ENCODE measurements at regions of chr6 and their contacts with region 1.

Region 1: GRCh38 chr6:42984001-42984923 is at the start of gene PPP2R5D:
- DNase-seq: peak; percentile 100
- ATAC-seq: peak; percentile 95
- H3K4me3 ChIP-seq: peak within 1 kb of the TSS; percentile 88 to 99 (median 92)
- H3K27ac ChIP-seq: peak within 1 kb of the TSS; percentile 75
- H3K4me1 ChIP-seq: peaks cover 52% of the 10 kb centered on the region
- H3K27me3 ChIP-seq: no peaks in the 10 kb centered on the region; a peak in 1 of 5 replicates
- CTCF ChIP-seq: no peak
- EP300 ChIP-seq: no peak
- POLR2A ChIP-seq: peak; percentile 93 to 99
- RAD21 ChIP-seq: peak; percentile 29; the same call in 1 of the 2 replicates
- total RNA-seq, gene PPP2R5D: 55.6 and 60.4 TPM in 2 replicates

Region 2: DNA sequence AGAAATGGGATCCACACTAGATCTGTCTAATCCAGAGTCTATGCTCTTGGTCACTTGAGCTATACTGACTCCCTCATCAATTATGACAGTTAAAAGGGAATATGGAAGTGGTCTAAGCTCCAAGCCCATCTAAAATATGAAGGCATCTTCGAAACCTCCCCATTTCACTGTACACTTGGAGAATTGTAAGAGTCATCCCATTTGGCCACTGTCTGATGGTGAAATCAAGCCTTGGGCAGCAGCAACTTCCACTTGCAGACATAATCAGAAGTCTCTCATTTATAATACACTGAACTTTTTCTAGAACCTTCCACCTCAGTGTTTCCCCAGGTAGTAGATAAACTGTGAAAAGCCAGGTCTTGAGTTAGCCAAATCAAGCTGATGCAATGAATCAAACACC is 446.7 kb before region 1 on chr6:
- CTCF ChIA-PET with region 1: no interaction called
- POLR2A ChIA-PET with region 1: no interaction called
- in situ Hi-C with region 1: no loop called
- intact Hi-C with region 1: no loop called
- DNase-seq: no peak
- ATAC-seq: no peak
- H3K4me3 ChIP-seq: no peak overlapping the region
- H3K27ac ChIP-seq: no peak overlapping the region
- H3K4me1 ChIP-seq: no peaks in the 10 kb centered on the region
- H3K27me3 ChIP-seq: peaks cover 0 to 2% of the 10 kb centered on the region in 2 experiments; a peak in 1 of 5 replicates
- CTCF ChIP-seq: no peak
- EP300 ChIP-seq: no peak
- POLR2A ChIP-seq: no peak
- RAD21 ChIP-seq: no peak

Region 3: DNA sequence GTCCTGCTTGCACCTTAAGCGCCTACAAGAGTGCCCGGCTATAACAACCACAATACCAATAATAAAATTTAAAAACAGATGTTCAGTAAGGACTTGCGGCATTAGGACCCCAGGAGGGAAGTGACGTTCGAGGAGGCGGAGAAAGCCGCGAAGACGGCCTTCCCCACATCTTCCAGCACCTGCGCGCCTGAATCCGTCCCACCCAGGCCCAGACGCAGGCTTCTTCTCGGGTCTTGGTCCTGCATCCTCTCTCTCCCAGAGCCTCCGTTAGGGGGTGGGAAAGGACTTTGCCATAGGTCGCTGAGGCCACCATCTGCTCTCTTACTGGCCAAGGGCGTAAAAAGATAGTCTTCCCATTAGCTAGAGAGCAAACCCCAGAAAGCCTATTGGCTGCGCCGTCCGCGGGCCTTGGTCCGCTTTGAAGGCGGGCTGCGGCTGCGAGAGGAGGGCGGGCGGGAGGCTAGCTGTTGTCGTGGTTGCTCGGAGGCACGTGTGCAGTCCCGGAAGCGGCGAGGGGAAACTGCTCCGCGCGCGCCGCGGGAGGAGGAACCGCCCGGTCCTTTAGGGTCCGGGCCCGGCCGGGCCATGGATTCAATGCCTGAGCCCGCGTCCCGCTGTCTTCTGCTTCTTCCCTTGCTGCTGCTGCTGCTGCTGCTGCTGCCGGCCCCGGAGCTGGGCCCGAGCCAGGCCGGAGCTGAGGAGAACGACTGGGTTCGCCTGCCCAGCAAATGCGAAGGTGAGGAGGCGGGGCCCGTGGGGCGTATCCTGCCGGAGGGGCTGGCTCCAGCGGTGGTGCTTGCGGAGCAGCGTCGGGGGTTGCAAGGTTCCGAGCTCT is 55.1 kb before region 1 on chr6 and contains the start of gene CNPY3:
- CTCF ChIA-PET with region 1: no interaction called
- POLR2A ChIA-PET with region 1: interaction called, 36 read pairs
- in situ Hi-C with region 1: no loop called
- intact Hi-C with region 1: no loop called
- DNase-seq: peak; percentile 97
- ATAC-seq: peak; percentile 94
- H3K4me3 ChIP-seq: peak within 1 kb of the TSS; percentile 71 to 79 (median 78)
- H3K27ac ChIP-seq: peak within 1 kb of the TSS; percentile 83
- H3K4me1 ChIP-seq: peaks cover 64% of the 10 kb centered on the region
- H3K27me3 ChIP-seq: no peaks in the 10 kb centered on the region; a peak in 1 of 5 replicates
- CTCF ChIP-seq: peak; percentile 46
- EP300 ChIP-seq: peak in 1 of 2 experiments; percentile 8; a peak in 1 of 4 replicates
- POLR2A ChIP-seq: peak; percentile 70 to 74
- RAD21 ChIP-seq: peak; percentile 44
- total RNA-seq, gene CNPY3: 31.4 and 60.2 TPM in 2 replicates

Region 4: GRCh38 chr6:42952389-42952788 is 31.9 kb before region 1 on chr6:
- CTCF ChIA-PET with region 1: no interaction called
- POLR2A ChIA-PET with region 1: no interaction called
- in situ Hi-C with region 1: no loop called
- intact Hi-C with region 1: no loop called
- DNase-seq: no peak
- ATAC-seq: no peak
- H3K4me3 ChIP-seq: no peak overlapping the region
- H3K27ac ChIP-seq: no peak overlapping the region
- H3K4me1 ChIP-seq: no peaks in the 10 kb centered on the region
- H3K27me3 ChIP-seq: no peaks in the 10 kb centered on the region
- CTCF ChIP-seq: no peak
- EP300 ChIP-seq: no peak
- POLR2A ChIP-seq: no peak
- RAD21 ChIP-seq: no peak

Region 5: DNA sequence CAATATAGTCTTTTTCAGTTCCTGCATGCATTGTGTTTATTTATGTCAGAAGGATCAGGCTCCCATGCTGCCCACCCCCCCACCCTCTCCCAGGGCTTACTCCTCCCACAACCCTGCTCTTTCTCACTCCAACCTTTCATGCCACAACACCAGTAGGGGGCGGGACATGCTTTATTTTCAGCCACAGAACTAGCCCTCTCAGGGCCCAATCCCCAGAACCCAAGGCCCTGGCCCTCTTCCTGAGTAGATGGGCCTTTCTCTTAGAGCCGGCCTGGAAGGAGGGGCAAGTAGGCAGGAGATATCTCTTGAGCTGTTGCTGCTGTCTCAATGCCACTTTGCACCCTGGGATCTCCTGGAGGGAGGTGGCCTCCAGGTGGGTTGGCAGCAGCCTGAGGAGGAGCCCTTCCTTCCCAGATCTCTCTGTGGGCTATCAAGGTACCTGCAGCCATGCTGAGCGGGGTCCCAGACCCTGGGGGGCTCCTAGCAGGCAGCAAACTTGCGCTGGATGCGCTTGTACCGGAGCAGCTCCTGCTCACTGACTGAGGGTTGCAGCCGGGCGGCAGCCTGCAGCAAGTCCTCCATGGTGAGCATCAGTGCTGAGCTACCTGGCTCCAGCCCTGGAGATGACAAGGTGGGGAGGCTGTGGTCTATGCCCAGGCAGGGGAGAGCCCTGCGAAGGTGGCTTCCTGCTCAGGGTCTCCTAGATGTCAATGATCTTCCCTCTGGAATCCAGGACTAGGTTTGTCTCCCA is 20.2 kb before region 1 on chr6:
- CTCF ChIA-PET with region 1: no interaction called
- POLR2A ChIA-PET with region 1: interaction called, 38 read pairs
- in situ Hi-C with region 1: no loop called
- intact Hi-C with region 1: no loop called
- DNase-seq: peak; percentile 76
- ATAC-seq: peak; percentile 44
- H3K4me3 ChIP-seq: no peak overlapping the region
- H3K27ac ChIP-seq: no peak overlapping the region
- H3K4me1 ChIP-seq: peaks cover 35% of the 10 kb centered on the region
- H3K27me3 ChIP-seq: no peaks in the 10 kb centered on the region; a peak in 1 of 5 replicates
- CTCF ChIP-seq: peak; percentile 72
- EP300 ChIP-seq: no peak
- POLR2A ChIP-seq: no peak
- RAD21 ChIP-seq: peak; percentile 62

Region 6: DNA sequence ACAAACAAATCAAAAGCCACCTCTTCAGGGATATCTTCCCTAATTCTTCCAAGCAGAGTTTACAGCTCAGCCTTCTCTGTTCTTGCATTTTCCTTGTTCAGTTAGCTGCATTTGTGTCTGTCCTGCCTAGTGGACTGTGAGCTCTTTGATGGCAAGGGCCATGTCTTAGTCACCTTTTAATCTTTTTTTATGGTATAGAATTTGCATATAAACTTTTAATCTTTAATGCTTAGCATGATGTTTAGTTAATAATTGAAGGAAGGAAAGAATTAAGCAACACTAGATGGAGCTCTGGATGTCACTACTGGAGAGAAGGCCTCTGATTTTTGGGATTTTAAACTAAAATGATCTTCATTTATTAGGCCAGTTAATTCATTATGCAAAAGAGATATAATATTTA is 12.3 kb after region 1 on chr6:
- CTCF ChIA-PET with region 1: no interaction called
- POLR2A ChIA-PET with region 1: interaction called, 23 read pairs
- in situ Hi-C with region 1: no loop called
- intact Hi-C with region 1: no loop called
- DNase-seq: no peak
- ATAC-seq: no peak; the same call in 1 of the 3 replicates
- H3K4me3 ChIP-seq: no peak overlapping the region
- H3K27ac ChIP-seq: no peak overlapping the region
- H3K4me1 ChIP-seq: no peaks in the 10 kb centered on the region
- H3K27me3 ChIP-seq: no peaks in the 10 kb centered on the region
- CTCF ChIP-seq: no peak
- EP300 ChIP-seq: no peak
- POLR2A ChIP-seq: no peak
- RAD21 ChIP-seq: no peak

Region 7: DNA sequence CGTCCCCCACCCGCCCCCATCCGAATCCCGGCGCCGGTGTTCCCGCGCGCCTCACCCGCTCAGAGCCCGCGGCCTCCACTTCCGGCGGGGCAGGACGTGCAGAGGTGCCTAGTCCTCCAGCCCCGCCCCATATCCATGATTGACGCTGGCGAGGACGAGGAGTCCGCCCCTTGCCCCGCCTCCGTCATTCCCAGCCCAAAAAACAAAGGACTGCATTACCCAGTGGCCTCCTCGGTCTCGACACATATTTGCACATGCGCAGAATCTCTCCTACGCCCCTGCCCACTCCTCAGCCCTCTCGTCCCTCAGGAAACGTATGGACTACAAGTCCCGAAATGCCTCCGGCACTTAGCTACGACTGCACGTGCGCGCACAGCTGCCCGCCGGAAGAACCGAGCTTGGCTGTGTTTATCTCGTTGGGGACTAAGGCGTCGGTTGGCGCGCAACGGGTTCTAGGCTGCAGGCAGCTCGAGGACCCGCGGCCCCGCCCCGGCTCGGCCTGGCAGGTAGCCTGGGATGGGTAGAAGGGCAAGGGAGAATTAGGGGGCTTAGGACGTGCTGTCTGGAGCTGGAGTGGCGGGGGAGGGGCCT is 29.7 kb after region 1 on chr6 and contains the starts of genes KLHDC3 and MEA1:
- CTCF ChIA-PET with region 1: no interaction called
- POLR2A ChIA-PET with region 1: interaction called, 55 read pairs
- in situ Hi-C with region 1: no loop called
- intact Hi-C with region 1: loop called (anchors 1 kb)
- DNase-seq: peak; percentile 100
- ATAC-seq: peak; percentile 94
- H3K4me3 ChIP-seq: peak within 1 kb of the TSS; percentile 88 to 93 (median 91)
- H3K27ac ChIP-seq: peak within 1 kb of the TSS; percentile 44
- H3K4me1 ChIP-seq: peaks cover 38% of the 10 kb centered on the region
- H3K27me3 ChIP-seq: no peaks in the 10 kb centered on the region; a peak in 1 of 5 replicates
- CTCF ChIP-seq: no peak
- EP300 ChIP-seq: no peak; a peak in 1 of 4 replicates
- POLR2A ChIP-seq: peak in 1 of 2 experiments; percentile 68; a peak in 2 of 4 replicates
- RAD21 ChIP-seq: no peak
- total RNA-seq, gene KLHDC3: 91.5 and 92.5 TPM in 2 replicates
- total RNA-seq, gene MEA1: 86.2 and 110 TPM in 2 replicates

Region 8: DNA sequence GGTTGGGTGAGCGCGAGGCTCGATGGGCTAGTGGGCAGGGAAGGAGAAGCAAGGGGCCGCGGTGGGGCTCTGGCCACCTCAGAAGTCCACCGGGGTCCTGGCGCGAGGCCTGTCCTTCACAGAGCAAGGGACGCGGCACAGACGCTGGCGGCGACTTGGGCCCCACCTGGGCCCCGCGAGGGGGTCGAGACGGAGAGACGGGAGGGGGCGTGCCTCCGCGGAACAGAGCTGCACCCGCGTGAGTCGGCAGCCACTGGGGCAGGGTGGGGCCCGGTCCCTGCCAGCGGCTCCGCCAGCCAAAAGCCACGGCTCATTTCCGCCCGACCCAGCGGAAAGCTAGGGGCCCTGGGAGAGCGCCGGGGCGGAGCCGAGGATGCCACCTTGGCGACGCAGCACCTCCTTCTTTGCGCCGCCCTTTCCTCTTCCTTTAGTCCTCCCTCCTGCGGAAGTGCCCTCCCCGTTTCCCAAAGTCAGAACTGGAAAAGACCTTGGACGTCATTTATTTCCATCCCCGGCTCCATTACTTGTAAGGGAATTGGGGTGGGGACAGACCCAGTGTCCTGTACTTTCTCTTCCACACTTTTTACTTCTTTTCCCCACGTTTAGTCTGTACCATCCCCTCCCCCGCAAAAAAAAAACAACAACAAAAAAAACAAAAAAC is 69.4 kb after region 1 on chr6 and contains the start of gene CUL7:
- CTCF ChIA-PET with region 1: no interaction called
- POLR2A ChIA-PET with region 1: interaction called, 28 read pairs
- in situ Hi-C with region 1: no loop called
- intact Hi-C with region 1: no loop called
- DNase-seq: peak; percentile 91
- ATAC-seq: peak; percentile 95
- H3K4me3 ChIP-seq: peak within 1 kb of the TSS; percentile 75 to 96 (median 94)
- H3K27ac ChIP-seq: peak within 1 kb of the TSS; percentile 84
- H3K4me1 ChIP-seq: peaks cover 49% of the 10 kb centered on the region
- H3K27me3 ChIP-seq: no peaks in the 10 kb centered on the region; a peak in 1 of 5 replicates
- CTCF ChIP-seq: no peak
- EP300 ChIP-seq: 0 out of 4 replicates have a peak, but pooled peaks of 1 of the 2 experiments have one; percentile 2
- POLR2A ChIP-seq: peak in 1 of 2 experiments; percentile 95; a peak in 2 of 4 replicates
- RAD21 ChIP-seq: peak; percentile 74
- total RNA-seq, gene CUL7: 30.7 and 32.0 TPM in 2 replicates

Region 9: DNA sequence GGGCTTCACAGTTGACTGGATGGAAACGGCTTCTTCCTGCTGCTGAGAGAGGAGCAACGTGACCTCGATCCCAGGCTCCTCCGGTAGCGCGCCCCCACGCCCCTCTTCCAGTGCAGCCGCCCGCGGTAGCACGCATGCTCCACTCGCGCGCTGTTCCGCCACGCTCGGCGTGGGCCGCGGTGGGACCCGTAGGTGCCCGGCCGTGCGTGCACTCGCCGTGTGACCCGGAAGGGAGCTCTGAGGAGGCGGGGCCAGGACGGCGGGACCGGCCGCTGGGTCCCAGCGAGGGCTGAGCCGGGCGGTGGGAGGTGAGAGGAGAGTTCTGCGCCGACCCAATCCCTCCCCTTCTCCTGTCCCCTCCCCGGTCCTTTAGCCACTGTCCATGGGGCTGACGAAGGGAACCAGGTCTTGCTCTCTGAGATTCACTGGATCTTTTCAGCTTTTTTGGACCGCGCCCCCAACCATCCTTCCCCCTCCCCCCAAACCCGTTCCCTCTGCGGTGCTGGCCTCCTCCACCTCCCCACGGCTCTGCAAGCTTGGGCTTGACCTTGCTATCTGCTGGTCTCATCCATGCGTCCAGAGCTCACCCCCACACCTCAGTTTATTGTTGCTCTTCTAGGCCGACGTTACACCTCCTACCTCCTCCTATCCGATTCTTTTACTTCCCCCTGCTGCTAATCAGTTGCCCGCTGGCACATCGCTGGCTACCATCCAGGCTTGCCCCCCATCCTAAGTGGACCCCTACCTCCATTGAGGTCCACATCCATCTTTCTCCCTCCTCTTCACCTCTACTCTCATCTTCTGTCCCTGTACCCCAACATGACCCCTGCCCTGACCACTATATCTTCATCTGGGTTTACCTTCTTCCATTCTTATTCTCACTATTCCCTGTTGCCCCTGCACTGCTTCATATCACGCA is 197.9 kb after region 1 on chr6 and contains the start of gene CUL9:
- CTCF ChIA-PET with region 1: no interaction called
- POLR2A ChIA-PET with region 1: no interaction called
- in situ Hi-C with region 1: no loop called
- intact Hi-C with region 1: no loop called
- DNase-seq: peak; percentile 60
- ATAC-seq: peak; percentile 95
- H3K4me3 ChIP-seq: peak within 1 kb of the TSS; percentile 73 to 83 (median 78)
- H3K27ac ChIP-seq: peak within 1 kb of the TSS; percentile 58
- H3K4me1 ChIP-seq: peaks cover 22% of the 10 kb centered on the region
- H3K27me3 ChIP-seq: no peaks in the 10 kb centered on the region; a peak in 1 of 5 replicates
- CTCF ChIP-seq: peak; percentile 56
- EP300 ChIP-seq: peak in 1 of 2 experiments; percentile 23; a peak in 1 of 4 replicates
- POLR2A ChIP-seq: peak; percentile 62 to 86; a peak in 3 of 4 replicates
- RAD21 ChIP-seq: peak; percentile 69
- total RNA-seq, gene CUL9: 10.5 and 11.4 TPM in 2 replicates

Region 10: DNA sequence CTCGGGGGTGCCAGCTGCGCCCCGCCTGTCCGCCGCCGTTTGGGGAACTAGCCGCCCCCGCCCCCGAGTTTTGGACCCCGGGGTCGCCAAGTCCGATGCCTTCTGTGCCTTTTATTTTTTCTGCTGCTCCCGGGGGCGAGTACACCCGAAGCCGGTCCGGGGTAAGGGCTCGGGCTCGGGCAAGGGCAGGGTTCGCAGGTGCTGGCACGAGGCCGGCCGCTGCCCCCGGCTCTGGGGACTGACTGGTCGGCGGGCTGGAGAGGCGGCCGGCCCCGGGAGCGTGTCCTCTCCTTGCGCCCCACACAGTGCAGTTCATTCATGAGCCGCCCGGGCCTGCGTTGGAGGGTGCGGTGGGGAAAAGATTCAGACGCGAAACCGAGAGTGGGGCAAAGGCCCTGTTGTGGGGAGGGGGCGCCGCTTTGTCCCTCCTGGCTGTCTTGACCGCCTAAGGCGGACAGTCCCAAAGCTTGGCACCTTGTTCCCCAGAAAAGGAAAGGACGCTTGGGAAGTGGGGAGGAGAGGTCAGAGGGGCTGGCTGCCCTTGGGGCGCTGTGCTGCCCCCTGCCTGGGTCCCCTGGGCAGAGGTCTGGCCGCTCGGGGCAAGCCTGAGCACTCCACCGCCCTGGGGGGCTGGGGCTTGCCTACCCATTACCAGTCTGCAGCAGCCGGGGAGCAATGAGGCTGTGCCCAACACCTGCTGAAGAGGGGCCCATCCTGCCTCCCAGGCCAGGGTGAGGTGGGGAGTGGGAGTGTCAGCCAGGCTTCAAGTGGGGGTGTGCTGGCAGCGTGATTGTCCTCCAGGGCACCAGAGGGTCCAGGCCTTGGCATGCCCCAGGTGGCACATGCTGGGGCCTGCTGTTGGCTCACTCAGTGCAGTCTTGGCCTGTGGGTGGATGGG is 1144.0 kb after region 1 on chr6:
- CTCF ChIA-PET with region 1: no interaction called
- POLR2A ChIA-PET with region 1: no interaction called
- in situ Hi-C with region 1: no loop called
- intact Hi-C with region 1: no loop called
- DNase-seq: peak; percentile 35
- ATAC-seq: peak; percentile 85
- H3K4me3 ChIP-seq: peak overlapping the region; percentile 87 to 95 (median 94)
- H3K27ac ChIP-seq: peak overlapping the region; percentile 63
- H3K4me1 ChIP-seq: peaks cover 79% of the 10 kb centered on the region
- H3K27me3 ChIP-seq: no peaks in the 10 kb centered on the region; a peak in 1 of 5 replicates
- CTCF ChIP-seq: peak; percentile 64
- EP300 ChIP-seq: no peak
- POLR2A ChIP-seq: 0 out of 4 replicates have a peak, but pooled peaks of 1 of the 2 experiments have one; percentile 19
- RAD21 ChIP-seq: no peak

Measured in HepG2 (cell line).